HEK293 (cell line): ENCODE measurements at regions of chr14 and their contacts with region 1.

Region 1: GRCh38 chr14:30283826-30284446 is 275.0 kb upstream of the G2E3 start:
- H3K4me3 ChIP-seq: no peak overlapping the region
- H3K27ac ChIP-seq: no peak overlapping the region
- H3K4me1 ChIP-seq: no peaks in the 10 kb centered on the region
- CTCF ChIP-seq: peak; percentile 44; the same call in 1 of the 2 replicates

Region 2: GRCh38 chr14:30227876-30228275 is 56.1 kb before region 1 on chr14:
- CTCF ChIA-PET with region 1: no interaction called
- POLR2A ChIA-PET with region 1: no interaction called
- H3K4me3 ChIP-seq: no peak overlapping the region
- H3K27ac ChIP-seq: no peak overlapping the region
- H3K4me1 ChIP-seq: peaks cover 11% of the 10 kb centered on the region
- CTCF ChIP-seq: no peak

Region 3: DNA sequence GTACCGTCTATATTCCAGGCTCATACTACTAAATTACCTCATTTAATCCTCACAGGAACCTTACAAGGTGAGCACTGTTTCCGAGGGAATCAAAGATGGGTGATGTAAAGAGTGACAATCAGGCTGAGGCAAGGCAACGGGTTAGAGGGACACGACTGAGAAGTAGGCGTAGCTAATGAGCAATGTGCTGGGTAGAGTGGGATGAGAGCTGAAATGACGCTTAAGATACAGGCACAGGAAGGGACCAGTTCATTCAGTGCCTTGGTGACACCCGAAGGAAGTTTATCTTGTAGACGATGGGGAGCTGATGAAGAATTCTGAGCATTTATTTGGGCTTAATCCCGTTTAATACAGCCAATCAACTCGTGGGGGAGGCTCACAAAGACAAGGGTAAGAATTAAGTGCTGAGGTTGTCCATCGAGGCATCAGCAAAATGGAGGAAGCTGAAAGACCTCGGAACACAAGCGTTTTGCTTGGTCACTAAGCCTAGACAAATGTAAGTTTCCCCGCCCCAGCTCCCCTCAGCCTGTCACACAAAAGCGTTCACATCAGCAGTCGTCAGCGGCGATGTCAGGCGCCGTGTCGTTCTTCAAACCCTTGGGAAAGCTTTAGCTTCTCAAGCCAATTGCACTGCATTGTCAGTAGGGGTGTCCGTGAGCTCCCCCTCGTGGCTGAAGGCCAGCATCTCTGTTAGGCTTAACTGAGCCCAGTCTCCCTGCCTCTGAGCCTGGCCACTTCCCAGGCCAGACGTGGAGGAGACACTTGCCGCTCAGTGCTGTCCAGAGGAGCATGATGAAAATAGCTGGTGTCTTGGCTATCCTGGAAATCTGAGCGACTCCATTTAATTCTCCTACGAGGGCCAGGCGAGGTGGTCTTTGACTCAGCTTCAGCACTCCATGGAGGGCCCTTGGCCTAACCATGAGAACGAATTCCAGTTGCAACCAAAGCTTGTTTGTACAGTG is 13.5 kb before region 1 on chr14:
- CTCF ChIA-PET with region 1: interaction called, 80 read pairs
- POLR2A ChIA-PET with region 1: interaction called, 4 read pairs
- H3K4me3 ChIP-seq: peak overlapping the region; percentile 34
- H3K27ac ChIP-seq: no peak overlapping the region
- H3K4me1 ChIP-seq: no peaks in the 10 kb centered on the region
- CTCF ChIP-seq: peak; percentile 68; the same call in 1 of the 2 replicates

Region 4: DNA sequence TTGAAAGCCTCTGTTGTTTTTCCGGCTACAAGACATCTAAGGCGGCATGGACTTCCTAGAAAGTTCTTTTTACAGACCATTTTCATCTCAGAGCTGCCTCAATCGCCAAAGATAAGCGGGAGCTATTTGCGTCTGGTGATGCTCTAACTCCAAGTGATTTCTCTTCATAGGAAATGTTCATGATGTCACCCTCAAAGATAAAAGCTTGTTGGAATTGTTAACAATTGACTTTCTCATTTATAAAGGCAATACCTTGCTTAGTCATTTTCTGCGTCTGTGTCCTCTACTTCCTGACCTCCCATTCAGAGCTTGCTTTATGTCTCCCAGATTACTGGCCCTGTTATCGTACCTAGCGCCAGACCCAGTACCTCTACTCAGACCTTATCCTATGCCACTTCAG is 16.0 kb after region 1 on chr14:
- CTCF ChIA-PET with region 1: interaction called, 13 read pairs
- POLR2A ChIA-PET with region 1: no interaction called
- H3K4me3 ChIP-seq: no peak overlapping the region
- H3K27ac ChIP-seq: no peak overlapping the region
- H3K4me1 ChIP-seq: no peaks in the 10 kb centered on the region
- CTCF ChIP-seq: no peak

Region 5: GRCh38 chr14:30706704-30707103 is 422.8 kb after region 1 on chr14:
- CTCF ChIA-PET with region 1: no interaction called
- POLR2A ChIA-PET with region 1: no interaction called
- H3K4me3 ChIP-seq: no peak overlapping the region
- H3K27ac ChIP-seq: no peak overlapping the region
- H3K4me1 ChIP-seq: no peaks in the 10 kb centered on the region
- CTCF ChIP-seq: no peak